ENCODE measurements at regions of chr16 and their contacts with region 1.

Region 1: DNA sequence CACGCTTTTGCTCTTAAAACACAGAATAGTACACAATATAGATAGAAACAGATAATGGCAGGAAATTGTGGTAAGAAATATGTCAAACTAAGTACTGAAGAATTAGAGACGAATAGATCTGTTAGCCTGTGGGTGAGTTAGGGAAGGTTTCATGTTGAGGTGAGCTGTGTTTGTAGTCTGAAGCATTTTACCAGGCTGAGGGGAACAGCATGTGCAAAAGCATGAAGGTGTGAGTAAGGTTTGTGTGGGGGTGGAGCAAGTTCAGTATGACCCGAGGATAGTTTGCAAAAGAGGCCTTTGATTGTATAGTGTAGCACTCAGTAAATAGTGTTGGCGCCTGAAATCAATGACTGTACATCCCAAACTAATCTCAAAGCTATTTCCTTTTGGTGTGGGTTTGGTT is 13.8 kb downstream of the IGSF6 start:
- DNase-seq: no peak
- ATAC-seq: no peak
- H3K4me3 ChIP-seq: no peak overlapping the region
- H3K27ac ChIP-seq: peak overlapping the region in 1 of 12 donors; percentile 43
- H3K4me1 ChIP-seq: peaks cover 0 to 38% (median 0%) of the 10 kb centered on the region in 12 donors
- H3K27me3 ChIP-seq: no peaks in the 10 kb centered on the region
- CTCF ChIP-seq: no peak
- POLR2A ChIP-seq: no peak

Region 2: DNA sequence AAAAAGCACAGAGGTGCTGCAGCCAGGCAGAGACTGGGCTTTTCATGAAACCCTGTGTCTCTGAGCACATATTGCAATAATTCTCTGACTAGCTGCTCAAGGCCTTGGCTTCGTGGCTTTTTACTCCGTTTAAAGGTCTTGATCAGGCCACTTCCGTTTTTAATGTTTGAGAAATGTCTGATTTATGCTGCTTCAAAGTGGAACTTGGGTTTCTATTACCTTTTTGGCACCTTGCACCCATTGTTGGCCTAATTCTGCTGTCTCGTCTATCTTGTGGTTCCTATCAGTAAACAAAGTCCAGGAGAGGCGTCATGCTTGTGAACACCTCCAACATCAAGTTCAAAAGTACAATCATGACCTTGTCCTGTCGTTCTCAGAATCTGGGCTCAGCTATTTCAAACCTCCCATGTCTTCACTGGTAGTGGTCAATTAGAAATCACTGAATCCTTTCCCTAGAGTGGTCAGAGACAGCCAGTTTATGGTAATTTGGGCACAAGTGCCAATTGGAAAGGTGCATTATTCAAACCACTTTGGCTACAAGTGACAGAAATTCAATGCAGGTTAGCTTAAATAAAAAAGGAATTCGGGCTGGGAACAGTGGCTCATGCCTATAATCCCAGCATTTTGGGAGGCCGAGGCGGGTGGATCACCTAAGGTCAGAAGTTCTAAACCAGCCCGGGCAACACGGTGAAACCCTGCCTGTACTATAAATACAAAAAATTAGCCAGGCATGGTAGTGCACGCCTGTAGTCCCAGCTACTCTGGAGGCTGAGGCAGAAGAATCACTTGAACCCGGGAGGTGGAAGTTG is 72.5 kb before region 1 on chr16:
- intact Hi-C with region 1: no loop called
- DNase-seq: no peak
- ATAC-seq: no peak
- H3K4me3 ChIP-seq: no peak overlapping the region
- H3K27ac ChIP-seq: no peak overlapping the region
- H3K4me1 ChIP-seq: peaks cover 0 to 7% (median 0%) of the 10 kb centered on the region in 12 donors
- H3K27me3 ChIP-seq: no peaks in the 10 kb centered on the region
- CTCF ChIP-seq: no peak
- POLR2A ChIP-seq: no peak

Region 3: DNA sequence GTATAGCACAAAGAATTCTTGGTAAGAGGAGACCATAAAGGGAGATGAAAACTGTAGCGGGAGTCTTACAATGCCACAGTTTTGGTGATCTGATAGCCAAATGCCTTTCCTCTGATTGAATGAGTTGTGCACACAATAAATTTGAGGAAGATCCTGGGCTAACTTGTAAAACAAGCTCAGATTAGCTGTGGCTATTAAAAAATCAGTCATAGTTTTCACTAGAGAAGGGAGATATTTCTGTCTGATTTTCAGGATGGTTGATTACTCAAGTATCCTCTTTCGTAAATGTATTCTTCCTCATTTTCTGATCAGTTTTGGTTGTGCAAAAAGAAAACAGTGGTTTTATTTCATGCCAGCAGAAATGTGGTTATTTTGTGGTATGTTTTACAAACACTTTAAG is 48.3 kb before region 1 on chr16:
- intact Hi-C with region 1: loop called in 8 of 10 experiments (anchors 2 to 5 kb)
- DNase-seq: no peak
- ATAC-seq: no peak
- H3K4me3 ChIP-seq: no peak overlapping the region
- H3K27ac ChIP-seq: peak overlapping the region in 1 of 12 donors; percentile 40
- H3K4me1 ChIP-seq: peaks cover 0 to 33% (median 0%) of the 10 kb centered on the region in 12 donors
- H3K27me3 ChIP-seq: no peaks in the 10 kb centered on the region
- CTCF ChIP-seq: no peak
- POLR2A ChIP-seq: no peak

Region 4: DNA sequence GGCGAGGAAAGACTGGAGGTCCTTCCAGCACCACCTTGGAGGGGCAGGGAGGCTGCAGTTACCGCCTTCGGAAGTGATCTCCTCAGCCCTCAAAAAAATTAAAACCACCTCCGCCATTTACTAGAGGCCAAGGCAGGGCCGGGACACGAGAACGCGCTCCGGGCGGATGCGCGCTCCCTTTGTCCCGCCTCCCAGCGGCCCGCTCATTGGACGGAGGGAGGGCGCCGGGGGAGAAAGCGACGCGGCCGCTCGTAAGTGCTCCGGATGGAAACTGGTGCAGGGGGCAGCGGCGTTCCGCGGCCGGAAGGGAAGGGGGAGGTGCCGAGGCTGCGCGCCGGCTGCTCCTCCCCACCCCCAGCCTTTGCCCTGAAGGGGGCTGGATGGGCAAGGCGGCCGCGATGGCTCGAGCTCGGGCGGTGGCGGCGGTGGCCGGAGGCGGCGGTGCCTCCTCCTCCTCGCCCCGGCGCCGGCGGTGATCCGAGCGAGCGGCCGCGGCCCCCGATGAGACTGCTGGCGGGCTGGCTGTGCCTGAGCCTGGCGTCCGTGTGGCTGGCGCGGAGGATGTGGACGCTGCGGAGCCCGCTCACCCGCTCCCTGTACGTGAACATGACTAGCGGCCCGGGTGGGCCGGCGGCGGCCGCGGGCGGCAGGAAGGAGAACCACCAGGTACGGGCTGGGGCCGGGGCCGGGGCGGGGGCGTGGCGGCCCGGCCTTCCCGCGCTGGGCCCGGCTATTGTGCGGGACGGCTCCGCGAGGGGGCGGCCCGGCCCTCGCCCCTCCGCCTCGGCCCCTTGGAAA is 39.1 kb before region 1 on chr16 and contains the start of gene METTL9:
- intact Hi-C with region 1: loop called in 6 of 10 experiments (anchors 5 kb)
- DNase-seq: peak; percentile 94 to 97 (median 96)
- ATAC-seq: peak; percentile 99 to 100 (median 99)
- H3K4me3 ChIP-seq: peak within 1 kb of the TSS; percentile 71 to 96 (median 90)
- H3K27ac ChIP-seq: peak within 1 kb of the TSS; percentile 84 to 98 (median 94)
- H3K4me1 ChIP-seq: peaks cover 3 to 49% (median 25%) of the 10 kb centered on the region in 12 donors
- H3K27me3 ChIP-seq: no peaks in the 10 kb centered on the region
- CTCF ChIP-seq: peak in 2 of 12 donors; percentile 8 to 12
- POLR2A ChIP-seq: peak in 1 of 2 donors; percentile 83
- total RNA-seq, gene METTL9: 53.2 to 70.6 (median 59.3) TPM

Region 5: DNA sequence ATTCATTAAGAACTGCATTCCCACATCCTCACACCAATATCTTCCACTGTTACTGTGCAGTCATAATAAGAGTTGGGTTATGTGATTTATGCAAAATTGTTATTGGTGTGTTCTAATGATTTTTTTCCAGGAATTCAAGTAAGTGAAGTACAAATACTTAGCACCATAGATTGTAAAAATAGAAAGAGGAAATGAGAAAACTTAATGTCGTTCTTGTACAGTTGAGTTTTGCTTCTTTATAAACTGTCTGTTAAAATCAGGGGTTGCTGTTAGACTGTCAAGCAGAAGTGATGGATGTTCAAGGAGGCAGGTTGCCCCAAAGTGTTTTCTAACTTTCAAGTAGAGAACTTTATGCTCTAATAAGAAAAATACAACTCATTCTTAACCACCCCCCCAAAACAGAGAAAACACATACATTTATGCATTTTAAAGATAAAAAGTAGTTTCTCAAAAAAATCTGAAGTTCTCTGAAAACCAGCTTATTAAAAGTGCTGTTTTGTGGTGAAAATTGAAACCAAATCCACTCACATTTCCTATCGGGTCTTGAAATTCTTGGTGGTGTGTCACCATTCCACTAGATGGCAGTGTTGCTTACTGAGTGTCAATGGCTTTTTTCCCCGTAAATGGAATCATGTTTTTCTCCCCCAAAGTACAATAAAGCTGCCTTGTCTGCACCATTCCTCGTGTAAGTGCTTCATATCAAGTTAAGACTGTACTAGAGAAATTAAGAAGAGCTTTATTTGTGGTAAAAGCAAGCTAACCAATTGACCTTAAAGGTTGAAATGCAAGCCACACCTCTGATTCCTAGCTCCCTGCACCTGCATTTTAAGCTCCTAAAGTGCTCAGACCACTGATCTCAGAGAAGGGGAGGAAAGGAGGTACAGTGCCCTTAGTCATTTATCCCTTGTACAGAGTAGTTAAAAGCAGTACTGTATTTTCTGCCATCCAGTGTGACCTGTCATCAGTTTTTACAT is 18.5 kb after region 1 on chr16:
- intact Hi-C with region 1: no loop called
- DNase-seq: no peak
- ATAC-seq: no peak
- H3K4me3 ChIP-seq: no peak overlapping the region
- H3K27ac ChIP-seq: peak overlapping the region in 1 of 12 donors; percentile 38
- H3K4me1 ChIP-seq: peaks cover 0 to 71% (median 0%) of the 10 kb centered on the region in 12 donors
- H3K27me3 ChIP-seq: no peaks in the 10 kb centered on the region
- CTCF ChIP-seq: peak; percentile 75 to 92 (median 82)
- POLR2A ChIP-seq: no peak

Region 6: DNA sequence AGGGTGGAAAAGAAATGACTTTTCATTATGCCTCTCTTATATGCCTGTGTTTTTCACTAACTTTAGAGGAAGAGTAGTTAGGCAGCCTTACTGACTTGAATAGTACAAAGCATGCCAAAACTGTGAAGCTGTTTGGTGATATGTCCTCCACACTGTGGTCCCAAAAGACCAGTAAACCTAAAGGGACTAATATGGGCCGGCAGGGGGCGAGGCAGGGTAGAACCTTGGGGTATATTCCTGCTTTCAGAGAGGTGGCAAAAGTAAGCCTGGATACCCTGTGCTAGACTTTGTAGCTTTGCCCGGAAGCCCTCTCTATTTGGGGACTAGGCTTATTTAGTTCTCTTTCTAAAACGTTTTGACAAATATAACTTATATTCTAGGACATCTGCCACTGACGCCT is 417.3 kb after region 1 on chr16:
- intact Hi-C with region 1: no loop called
- DNase-seq: no peak
- ATAC-seq: no peak
- H3K4me3 ChIP-seq: no peak overlapping the region
- H3K27ac ChIP-seq: no peak overlapping the region
- H3K4me1 ChIP-seq: peaks cover 0 to 12% (median 0%) of the 10 kb centered on the region in 12 donors
- H3K27me3 ChIP-seq: no peaks in the 10 kb centered on the region
- CTCF ChIP-seq: no peak
- POLR2A ChIP-seq: no peak